ENCODE measurements at regions of chr17 and their contacts with region 1.

Region 1: DNA sequence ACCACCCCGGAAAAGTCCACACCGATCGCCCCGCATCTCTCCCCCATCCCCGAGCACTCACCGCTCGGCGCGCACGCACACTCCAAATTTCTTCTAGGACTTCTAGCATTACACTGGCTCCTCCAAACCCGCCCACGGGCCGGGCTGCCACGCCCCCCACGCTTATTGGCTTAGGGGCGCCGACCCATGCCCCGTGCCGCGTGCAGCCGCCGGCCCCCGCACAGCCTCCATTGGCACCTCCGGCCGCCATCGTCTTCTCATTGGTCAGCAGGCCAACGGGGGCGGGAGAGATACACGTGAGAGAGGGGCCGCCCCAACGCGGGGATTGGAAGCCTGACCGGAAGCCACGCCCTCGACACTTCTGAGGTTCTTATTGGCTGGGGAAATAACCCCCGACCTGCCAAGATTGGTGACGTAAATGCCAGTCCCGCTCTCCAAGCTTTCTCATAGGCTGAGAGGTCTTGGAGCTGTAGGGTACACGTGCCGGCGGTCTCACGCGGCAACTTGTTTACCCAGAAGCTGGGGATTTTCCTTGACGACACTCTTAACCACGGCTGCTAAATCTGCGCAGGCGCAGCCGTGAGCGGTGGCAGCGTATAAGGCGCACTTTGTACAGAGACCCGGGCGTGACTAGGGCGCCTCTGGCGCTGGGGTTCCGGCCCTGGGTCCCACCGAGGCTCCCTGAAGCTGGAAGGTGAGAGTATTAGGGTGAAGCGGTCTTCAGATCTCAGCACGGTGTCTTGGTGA is 4.2 kb upstream of the PER1 start:
- DNase-seq: peak; percentile 100
- H3K4me3 ChIP-seq: peak overlapping the region; percentile 86 to 91
- H3K27ac ChIP-seq: peak overlapping the region; percentile 99 to 100
- H3K4me1 ChIP-seq: peaks cover 0 to 54% (median 33%) of the 10 kb centered on the region in 4 donors
- H3K27me3 ChIP-seq: no peaks in the 10 kb centered on the region
- CTCF ChIP-seq: peak in 1 of 2 experiments; percentile 24

Region 2: DNA sequence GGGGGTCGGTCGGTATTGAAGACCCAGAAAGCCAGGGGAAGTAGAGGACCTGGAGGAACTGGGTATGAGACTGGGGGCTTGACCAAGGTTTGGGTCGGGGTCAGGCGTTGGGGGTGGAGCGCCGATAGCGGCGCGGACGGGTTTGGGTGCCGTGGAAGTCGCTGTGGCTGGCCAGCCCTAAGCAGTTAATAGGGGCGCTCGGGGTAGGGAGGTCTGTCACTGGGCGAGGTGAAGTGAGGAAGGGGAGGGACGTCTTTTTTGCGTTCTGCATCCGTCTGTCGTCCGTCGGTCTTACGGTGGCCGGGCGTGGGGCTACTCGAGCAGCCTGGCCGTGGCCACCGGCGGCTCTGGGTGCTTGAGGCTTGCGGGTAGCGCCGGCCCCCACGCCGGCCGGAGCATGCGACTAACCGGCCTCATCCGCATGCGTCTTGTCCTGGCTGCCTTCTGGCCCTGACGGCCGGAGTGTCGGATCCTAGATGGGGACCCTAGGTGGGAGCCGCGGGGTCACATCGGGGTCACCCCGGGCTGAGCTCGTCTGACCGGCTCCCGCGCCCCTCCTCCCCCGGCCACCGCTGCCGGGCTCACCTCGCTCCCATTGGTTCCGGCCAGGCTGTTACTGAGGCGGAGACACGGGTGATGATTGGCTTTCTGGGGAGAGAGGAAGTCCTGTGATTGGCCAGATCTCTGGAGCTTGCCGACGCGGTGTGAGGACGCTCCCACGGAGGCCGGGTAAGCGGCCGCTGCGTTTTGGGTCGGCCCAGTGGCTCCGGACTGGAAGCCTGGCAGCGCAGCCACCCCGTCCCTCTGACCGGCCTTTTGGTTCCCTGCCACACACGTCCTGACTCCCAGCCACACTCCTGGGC is 311.9 kb before region 1 on chr17:
- intact Hi-C with region 1: loop called (anchors 10 kb)
- DNase-seq: peak; percentile 93 to 97
- H3K4me3 ChIP-seq: peak overlapping the region; percentile 64 to 84
- H3K27ac ChIP-seq: peak overlapping the region; percentile 89 to 95
- H3K4me1 ChIP-seq: peaks cover 4 to 51% (median 28%) of the 10 kb centered on the region in 4 donors
- H3K27me3 ChIP-seq: no peaks in the 10 kb centered on the region
- CTCF ChIP-seq: no peak

Measured in tibial artery (tissue), 4 donors.